Sciatic nerve (tissue), 2 donors: ENCODE measurements at regions of chr9 and their contacts with region 1.

Region 1: DNA sequence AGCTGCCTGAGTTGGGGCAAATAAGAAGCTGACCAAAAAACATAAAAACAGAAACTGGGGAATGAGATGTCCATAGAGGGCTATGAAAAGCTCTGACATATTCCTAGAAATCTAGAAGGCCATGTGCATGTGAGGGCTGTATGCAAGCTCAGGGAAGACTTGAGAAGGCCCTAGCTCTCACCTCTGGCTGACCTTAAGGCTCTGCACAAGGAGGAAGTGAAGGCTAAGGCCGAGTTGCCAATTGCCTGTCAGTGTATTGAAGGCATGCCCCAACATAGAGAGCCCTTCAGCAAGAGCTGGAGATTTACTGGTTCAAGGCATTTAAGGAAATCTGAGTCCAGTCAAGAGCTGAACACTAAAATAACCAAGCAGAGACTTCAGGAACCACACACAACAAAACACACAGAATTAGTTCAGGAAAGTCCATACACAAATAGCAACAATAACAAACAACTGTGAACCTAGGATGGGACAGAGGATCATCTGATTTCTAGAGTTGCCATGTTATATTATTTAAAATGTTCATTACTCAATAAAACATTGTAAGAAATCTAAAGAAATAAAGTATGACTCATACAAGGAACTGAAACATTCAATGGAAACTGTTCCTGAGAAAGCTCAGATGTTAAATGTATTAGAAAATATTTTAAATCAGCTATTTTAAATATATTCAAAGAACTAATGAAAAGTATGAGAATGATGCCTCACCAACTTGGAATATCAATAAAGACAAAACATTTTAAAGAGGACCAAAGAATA is 161.8 kb downstream of the AUH start:
- DNase-seq: no peak
- ATAC-seq: no peak

Region 2: DNA sequence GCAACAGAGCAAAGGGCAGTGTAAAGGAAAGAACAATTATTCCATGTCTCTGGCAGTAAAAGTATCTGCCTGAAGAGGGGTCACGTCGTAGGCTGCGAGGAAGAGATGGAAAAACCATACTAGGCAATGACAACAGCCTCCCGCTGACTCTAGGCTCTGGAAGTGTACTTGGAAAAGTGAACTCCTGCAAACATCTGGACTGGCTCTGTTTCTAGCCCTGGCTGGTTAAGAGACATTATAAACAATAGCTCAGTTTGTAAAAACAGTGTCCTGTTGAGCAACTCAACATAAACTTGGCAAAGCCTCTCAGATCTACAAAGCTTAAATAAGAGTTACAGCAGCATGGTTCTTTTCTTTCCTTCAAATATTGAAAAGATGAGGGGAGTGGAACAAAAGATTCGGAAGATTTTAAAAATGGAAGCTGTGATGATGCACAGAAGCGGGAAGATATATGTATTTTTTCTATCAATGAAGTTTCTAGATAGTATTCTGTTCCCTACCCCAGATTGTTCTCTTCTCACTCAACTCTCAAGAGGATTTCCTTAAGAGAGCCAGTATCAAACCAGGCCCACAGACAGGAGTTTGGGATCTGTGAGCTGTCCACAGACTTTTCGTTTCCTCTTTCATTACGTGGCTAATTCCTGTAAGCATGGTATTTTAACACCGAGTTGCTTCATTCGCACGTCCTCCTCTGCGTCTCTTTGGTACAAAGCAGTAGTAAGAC is 835.9 kb after region 1 on chr9:
- intact Hi-C with region 1: loop called (anchors 5 kb)
- DNase-seq: no peak
- ATAC-seq: peak; percentile 97